Endothelial cell of umbilical vein (primary cell): ENCODE measurements at regions of chr1 and their contacts with region 1.

Region 1: GRCh38 chr1:210233216-210234020 is 822 bp downstream of the SERTAD4 start:
- DNase-seq: peak; percentile 86
- H3K4me3 ChIP-seq: peak overlapping the region; percentile 66 to 80 (median 74)
- H3K27ac ChIP-seq: peak overlapping the region; percentile 83
- H3K4me1 ChIP-seq: peaks cover 35% of the 10 kb centered on the region
- H3K27me3 ChIP-seq: peaks cover 0 to 5% of the 10 kb centered on the region in 2 experiments
- CTCF ChIP-seq: no peak
- POLR2A ChIP-seq: peak; percentile 32

Region 2: GRCh38 chr1:209674957-209675564 is 558.4 kb before region 1 on chr1 and contains the start of gene G0S2:
- CTCF ChIA-PET with region 1: no interaction called
- POLR2A ChIA-PET with region 1: no interaction called
- dilution Hi-C with region 1: no loop called
- intact Hi-C with region 1: no loop called
- DNase-seq: no peak
- H3K4me3 ChIP-seq: peak within 1 kb of the TSS in 1 of 3 experiments; percentile 28
- H3K27ac ChIP-seq: no peak within 1 kb of the TSS
- H3K4me1 ChIP-seq: peaks cover 6% of the 10 kb centered on the region
- H3K27me3 ChIP-seq: peaks cover 36 to 69% of the 10 kb centered on the region in 2 experiments
- CTCF ChIP-seq: no peak
- POLR2A ChIP-seq: peak; percentile 60
- total RNA-seq, gene G0S2: 1.9 TPM in 1 of 2 replicates, not detected in the other

Region 3: GRCh38 chr1:210143465-210144062 is 89.9 kb before region 1 on chr1:
- CTCF ChIA-PET with region 1: no interaction called
- POLR2A ChIA-PET with region 1: no interaction called
- dilution Hi-C with region 1: no loop called
- intact Hi-C with region 1: loop called (anchors 1 kb)
- DNase-seq: peak; percentile 83
- H3K4me3 ChIP-seq: no peak overlapping the region
- H3K27ac ChIP-seq: no peak overlapping the region
- H3K4me1 ChIP-seq: no peaks in the 10 kb centered on the region
- H3K27me3 ChIP-seq: peaks cover 2 to 8% of the 10 kb centered on the region in 2 experiments
- CTCF ChIP-seq: peak; percentile 37 to 43
- POLR2A ChIP-seq: no peak

Region 4: GRCh38 chr1:210250998-210251679 is 17.7 kb after region 1 on chr1:
- CTCF ChIA-PET with region 1: interaction called, 8 read pairs
- POLR2A ChIA-PET with region 1: interaction called, 8 read pairs
- dilution Hi-C with region 1: no loop called
- intact Hi-C with region 1: loop called (anchors 1 kb)
- DNase-seq: peak; percentile 72
- H3K4me3 ChIP-seq: peak overlapping the region; percentile 34 to 57 (median 37)
- H3K27ac ChIP-seq: peak overlapping the region; percentile 39
- H3K4me1 ChIP-seq: peaks cover 20% of the 10 kb centered on the region
- H3K27me3 ChIP-seq: peaks cover 0 to 8% of the 10 kb centered on the region in 2 experiments
- CTCF ChIP-seq: no peak
- POLR2A ChIP-seq: no peak

Region 5: DNA sequence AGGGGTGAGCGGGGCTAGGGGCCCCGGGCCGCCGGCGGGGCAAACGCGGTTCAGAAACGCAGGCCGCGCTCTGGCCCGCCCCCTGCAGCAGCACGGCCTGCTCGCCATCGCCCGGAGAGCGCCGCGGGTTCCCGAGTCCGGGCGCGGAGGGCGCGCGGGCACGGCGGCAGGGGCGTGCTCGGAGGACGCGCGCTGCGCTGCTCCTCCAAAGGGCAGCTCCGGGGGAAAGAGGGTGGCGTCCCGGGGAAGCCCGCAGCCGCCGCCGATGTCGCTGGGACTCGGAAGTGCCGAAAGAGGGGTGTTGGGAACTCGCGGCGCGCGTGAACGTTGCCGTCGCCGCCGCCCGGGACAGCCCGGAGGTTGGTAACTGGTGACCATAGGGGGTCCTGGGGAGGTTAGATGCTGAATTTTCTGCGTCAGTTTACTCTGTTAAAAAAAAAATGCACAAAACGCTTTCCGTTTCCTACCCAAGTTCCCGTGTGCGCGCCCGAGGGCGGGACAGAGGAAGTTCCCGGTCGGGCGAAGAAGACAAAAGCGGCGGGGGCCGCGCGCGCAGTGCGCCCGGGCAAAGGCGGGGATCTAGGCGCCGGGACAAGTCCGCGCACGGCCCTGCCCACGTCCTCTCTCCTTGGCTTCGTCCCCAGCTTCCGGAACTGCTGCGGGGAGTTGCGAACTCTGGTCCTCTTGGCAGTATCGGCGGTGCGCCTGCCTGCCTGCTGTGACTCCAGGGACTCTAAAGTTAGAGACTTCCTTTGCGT is 95.5 kb after region 1 on chr1 and contains the start of gene HHAT:
- CTCF ChIA-PET with region 1: no interaction called
- POLR2A ChIA-PET with region 1: no interaction called
- dilution Hi-C with region 1: no loop called
- intact Hi-C with region 1: loop called (anchors 2 kb)
- DNase-seq: peak; percentile 59
- H3K4me3 ChIP-seq: peak within 1 kb of the TSS; percentile 46 to 82 (median 55)
- H3K27ac ChIP-seq: peak within 1 kb of the TSS; percentile 75
- H3K4me1 ChIP-seq: peaks cover 6% of the 10 kb centered on the region
- H3K27me3 ChIP-seq: peaks cover 0 to 2% of the 10 kb centered on the region in 2 experiments
- CTCF ChIP-seq: no peak
- POLR2A ChIP-seq: no peak
- total RNA-seq, gene HHAT: 2.4 TPM in 2 replicates

Region 6: GRCh38 chr1:211382714-211383480 is 1149.5 kb after region 1 on chr1:
- CTCF ChIA-PET with region 1: no interaction called
- POLR2A ChIA-PET with region 1: no interaction called
- dilution Hi-C with region 1: no loop called
- intact Hi-C with region 1: loop called (anchors 10 kb)
- DNase-seq: peak; percentile 94
- H3K4me3 ChIP-seq: peak overlapping the region; percentile 50 to 77 (median 56)
- H3K27ac ChIP-seq: peak overlapping the region; percentile 96
- H3K4me1 ChIP-seq: peaks cover 11% of the 10 kb centered on the region
- H3K27me3 ChIP-seq: no peaks in the 10 kb centered on the region
- CTCF ChIP-seq: no peak
- POLR2A ChIP-seq: peak; percentile 98